ENCODE measurements at regions of chr7 and their contacts with region 1.

Region 1: DNA sequence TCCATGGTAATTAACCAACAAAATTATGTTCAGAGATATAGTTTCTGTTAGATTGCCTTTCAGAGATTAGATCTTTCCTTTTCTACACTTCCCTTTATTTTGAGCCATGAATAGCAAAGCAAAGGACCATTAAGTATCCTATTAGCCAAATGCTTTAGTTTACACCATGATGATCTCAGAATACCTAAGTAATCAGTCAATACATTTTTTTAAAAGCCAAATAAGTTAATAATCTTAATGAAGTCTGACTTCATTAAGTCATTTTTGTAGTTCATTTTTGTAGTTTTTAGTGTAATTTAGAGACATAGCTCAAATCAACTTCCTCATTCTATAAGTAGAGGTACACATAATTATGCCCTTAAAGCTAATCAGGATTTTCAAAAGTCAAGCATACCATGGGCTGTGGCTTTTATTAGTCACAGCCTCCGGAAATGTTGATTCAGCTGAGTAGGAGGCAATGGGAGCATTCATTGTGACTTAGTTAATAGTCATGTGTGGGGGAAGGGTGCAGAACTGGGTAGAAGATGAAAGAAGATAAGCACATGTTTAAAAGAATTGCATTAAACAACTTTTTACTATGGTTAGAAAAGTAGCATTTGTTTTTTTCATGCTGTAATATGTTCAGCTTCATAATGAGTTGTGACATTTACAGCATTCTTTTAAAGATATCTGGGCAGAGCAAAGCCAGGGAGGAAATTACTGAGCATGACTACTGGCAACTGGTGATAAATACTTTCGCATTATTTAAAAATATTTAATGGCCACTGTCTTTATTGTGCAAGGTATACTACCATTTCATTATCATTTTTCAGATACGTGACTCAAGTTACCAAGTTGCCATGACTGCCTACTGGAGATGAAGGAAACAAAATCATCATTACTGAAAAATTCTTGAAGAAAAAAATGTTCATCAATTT is 57.3 kb upstream of the CCDC71L start:
- DNase-seq: peak; percentile 96
- ATAC-seq: peak; percentile 98
- H3K4me3 ChIP-seq: peak overlapping the region; percentile 22; the same call in 1 of the 2 replicates
- H3K27ac ChIP-seq: peak overlapping the region; percentile 91
- H3K4me1 ChIP-seq: peaks cover 26% of the 10 kb centered on the region
- H3K27me3 ChIP-seq: no peaks in the 10 kb centered on the region
- CTCF ChIP-seq: no peak

Region 2: GRCh38 chr7:106346678-106347217 is 371.5 kb before region 1 on chr7:
- CTCF ChIA-PET with region 1: no interaction called
- POLR2A ChIA-PET with region 1: no interaction called
- intact Hi-C with region 1: loop called (anchors 5 kb)
- DNase-seq: peak; percentile 98
- ATAC-seq: peak; percentile 91
- H3K4me3 ChIP-seq: no peak overlapping the region
- H3K27ac ChIP-seq: peak overlapping the region; percentile 52
- H3K4me1 ChIP-seq: peaks cover 28% of the 10 kb centered on the region
- H3K27me3 ChIP-seq: no peaks in the 10 kb centered on the region
- CTCF ChIP-seq: no peak

Region 3: DNA sequence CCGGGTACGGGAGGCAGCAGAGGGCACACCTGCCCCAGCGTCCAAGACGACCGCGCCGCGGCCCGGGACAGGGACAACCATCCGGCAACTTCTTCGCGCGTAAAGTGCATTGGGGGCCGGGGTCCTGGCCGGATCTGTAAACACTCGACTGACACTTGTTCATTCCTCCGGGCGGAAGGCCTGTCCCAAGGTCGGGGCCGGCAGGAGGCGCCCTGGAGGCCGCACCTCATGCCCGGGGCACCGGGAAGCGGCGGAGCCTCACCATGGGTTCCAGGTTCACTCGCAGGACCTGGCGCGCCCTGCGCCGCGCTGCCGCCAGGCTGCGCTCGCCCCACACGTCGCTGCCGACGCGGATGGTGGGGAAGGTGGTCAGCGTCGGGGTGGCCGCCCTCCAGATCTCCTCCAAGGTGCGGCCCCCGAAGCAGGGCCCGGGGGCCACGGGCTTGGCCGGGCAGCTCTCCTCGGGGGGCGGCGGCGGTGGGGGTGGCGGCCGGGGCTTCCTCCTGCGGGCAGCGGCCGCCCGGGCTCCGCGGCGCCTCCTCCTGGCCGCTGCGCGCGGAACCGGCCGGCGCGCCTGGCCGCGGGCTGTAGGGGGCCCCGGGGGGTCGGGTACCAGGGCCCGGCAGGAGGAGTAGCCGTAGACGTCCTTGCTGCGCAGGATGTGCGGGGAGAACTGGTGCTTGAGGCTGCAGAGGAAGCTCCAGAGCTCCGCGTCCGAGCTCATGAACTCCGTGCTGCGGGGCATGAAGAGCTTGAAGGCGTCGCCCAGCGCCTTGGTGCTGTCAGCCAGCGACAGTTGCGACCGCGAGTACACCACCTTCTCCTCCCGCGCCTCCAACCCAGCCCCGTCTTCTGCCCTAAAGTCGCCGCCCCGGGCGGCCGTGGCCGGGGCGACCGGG is 58.0 kb before region 1 on chr7:
- CTCF ChIA-PET with region 1: interaction called, 5 read pairs
- POLR2A ChIA-PET with region 1: no interaction called
- intact Hi-C with region 1: loop called (anchors 1 kb)
- DNase-seq: peak; percentile 79
- ATAC-seq: peak; percentile 66
- H3K4me3 ChIP-seq: peak overlapping the region; percentile 88
- H3K27ac ChIP-seq: peak overlapping the region; percentile 38
- H3K4me1 ChIP-seq: peaks cover 8% of the 10 kb centered on the region; the same call in 1 of the 2 replicates
- H3K27me3 ChIP-seq: no peaks in the 10 kb centered on the region
- CTCF ChIP-seq: peak; percentile 80

Region 4: GRCh38 chr7:106736508-106737201 is 18.4 kb after region 1 on chr7:
- CTCF ChIA-PET with region 1: no interaction called
- POLR2A ChIA-PET with region 1: no interaction called
- intact Hi-C with region 1: loop called (anchors 2 kb)
- DNase-seq: peak; percentile 72
- ATAC-seq: peak; percentile 97
- H3K4me3 ChIP-seq: no peak overlapping the region
- H3K27ac ChIP-seq: no peak overlapping the region
- H3K4me1 ChIP-seq: no peaks in the 10 kb centered on the region
- H3K27me3 ChIP-seq: no peaks in the 10 kb centered on the region
- CTCF ChIP-seq: peak; percentile 73

Region 5: GRCh38 chr7:106779877-106780276 is 61.7 kb after region 1 on chr7:
- CTCF ChIA-PET with region 1: no interaction called
- POLR2A ChIA-PET with region 1: no interaction called
- intact Hi-C with region 1: loop called (anchors 1 kb)
- DNase-seq: peak; percentile 40
- ATAC-seq: no peak
- H3K4me3 ChIP-seq: no peak overlapping the region
- H3K27ac ChIP-seq: no peak overlapping the region
- H3K4me1 ChIP-seq: peaks cover 28% of the 10 kb centered on the region
- H3K27me3 ChIP-seq: no peaks in the 10 kb centered on the region
- CTCF ChIP-seq: peak; percentile 39

Measured in PC-3 (cell line).